Activated naive CD4-positive, alpha-beta T cell treated with anti-CD3 and anti-CD28 coated beads for 36 hours (primary cell): ENCODE measurements at regions of chr6 and their contacts with region 1.

Region 1: GRCh38 chr6:89371849-89372505 is 19.5 kb upstream of the UBE2J1 start:
- DNase-seq: peak; percentile 81
- H3K4me3 Mint-ChIP-seq: no peak overlapping the region
- H3K27ac Mint-ChIP-seq: no peak overlapping the region
- H3K4me1 Mint-ChIP-seq: peaks cover 15% of the 10 kb centered on the region
- H3K27me3 Mint-ChIP-seq: no peaks in the 10 kb centered on the region

Region 2: GRCh38 chr6:88177961-88178464 is 1194.0 kb before region 1 on chr6:
- CTCF ChIA-PET with region 1: no interaction called
- intact Hi-C with region 1: no loop called
- DNase-seq: no peak
- H3K4me3 Mint-ChIP-seq: no peak overlapping the region
- H3K27ac Mint-ChIP-seq: no peak overlapping the region
- H3K4me1 Mint-ChIP-seq: no peaks in the 10 kb centered on the region
- H3K27me3 Mint-ChIP-seq: peaks cover 28% of the 10 kb centered on the region

Region 3: DNA sequence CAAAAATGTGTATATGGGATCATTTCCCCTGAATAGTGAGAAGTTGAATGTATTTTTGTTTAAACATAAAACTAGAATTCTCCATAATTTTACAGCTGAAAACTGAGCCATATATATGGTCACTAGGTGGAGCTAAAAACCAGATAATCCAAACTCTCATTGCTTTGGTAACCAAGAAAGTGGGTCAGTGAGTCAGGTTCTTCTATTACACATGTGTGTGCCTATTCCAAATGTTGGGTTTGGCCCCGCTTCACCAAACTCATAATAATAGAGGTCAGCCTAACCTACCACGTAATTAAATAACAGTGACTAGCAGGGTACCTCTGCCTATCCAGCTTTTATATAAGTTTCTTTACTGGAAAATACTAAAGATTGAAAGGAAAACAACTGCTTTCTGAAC is 389.3 kb before region 1 on chr6:
- CTCF ChIA-PET with region 1: interaction called, 10 read pairs
- intact Hi-C with region 1: loop called (anchors 1 kb)
- DNase-seq: peak; percentile 37
- H3K4me3 Mint-ChIP-seq: no peak overlapping the region
- H3K27ac Mint-ChIP-seq: no peak overlapping the region
- H3K4me1 Mint-ChIP-seq: no peaks in the 10 kb centered on the region
- H3K27me3 Mint-ChIP-seq: no peaks in the 10 kb centered on the region

Region 4: DNA sequence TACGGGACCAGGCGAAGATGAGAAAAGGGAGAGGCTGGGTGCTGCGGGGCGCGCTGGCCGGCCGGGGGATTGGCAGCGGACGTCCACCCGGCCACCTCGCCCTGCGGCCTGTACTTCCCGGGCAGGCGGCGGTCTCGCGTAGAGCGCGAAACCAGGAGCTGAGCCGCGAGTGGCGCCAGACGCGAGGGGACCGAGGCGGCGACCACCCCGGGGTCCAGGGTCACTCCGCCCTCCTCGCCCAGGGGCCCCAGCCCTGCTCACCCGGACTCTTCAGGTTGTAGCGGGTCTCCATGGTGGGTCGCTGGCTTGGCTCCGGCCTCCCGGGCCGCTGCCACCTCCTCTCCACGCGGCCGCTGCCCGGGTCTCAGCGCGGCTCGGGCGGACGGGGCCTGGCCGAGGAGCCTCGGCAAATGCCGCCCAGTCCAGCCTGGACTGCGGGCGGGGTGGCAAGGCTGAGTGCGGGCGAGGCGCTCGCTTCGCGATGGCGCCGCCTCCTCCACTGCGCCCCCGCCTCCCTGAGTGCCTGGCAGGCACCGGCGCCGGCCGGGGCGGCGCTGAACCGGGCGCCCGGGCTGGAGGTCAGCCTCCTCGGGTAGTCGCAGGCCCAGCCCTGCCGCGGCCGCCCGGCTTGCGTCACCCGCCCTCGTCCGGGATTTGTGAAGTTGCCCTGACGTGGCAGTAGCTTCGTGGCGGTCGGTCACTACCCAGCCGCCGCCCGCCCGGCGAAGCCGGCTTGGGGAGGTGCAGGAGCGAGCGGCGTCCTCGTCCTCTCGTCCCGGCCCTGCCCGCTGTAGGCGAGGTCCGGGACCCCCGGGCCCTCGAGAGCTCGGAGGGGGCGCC is 19.5 kb before region 1 on chr6 and contains the start of gene UBE2J1:
- CTCF ChIA-PET with region 1: interaction called, 42 read pairs
- intact Hi-C with region 1: loop called (anchors 1 kb)
- DNase-seq: peak; percentile 71
- H3K4me3 Mint-ChIP-seq: peak within 1 kb of the TSS; percentile 90
- H3K27ac Mint-ChIP-seq: peak within 1 kb of the TSS; percentile 84
- H3K4me1 Mint-ChIP-seq: peaks cover 66% of the 10 kb centered on the region
- H3K27me3 Mint-ChIP-seq: no peaks in the 10 kb centered on the region
- total RNA-seq, gene UBE2J1: 10.8 to 10.9 TPM

Region 5: DNA sequence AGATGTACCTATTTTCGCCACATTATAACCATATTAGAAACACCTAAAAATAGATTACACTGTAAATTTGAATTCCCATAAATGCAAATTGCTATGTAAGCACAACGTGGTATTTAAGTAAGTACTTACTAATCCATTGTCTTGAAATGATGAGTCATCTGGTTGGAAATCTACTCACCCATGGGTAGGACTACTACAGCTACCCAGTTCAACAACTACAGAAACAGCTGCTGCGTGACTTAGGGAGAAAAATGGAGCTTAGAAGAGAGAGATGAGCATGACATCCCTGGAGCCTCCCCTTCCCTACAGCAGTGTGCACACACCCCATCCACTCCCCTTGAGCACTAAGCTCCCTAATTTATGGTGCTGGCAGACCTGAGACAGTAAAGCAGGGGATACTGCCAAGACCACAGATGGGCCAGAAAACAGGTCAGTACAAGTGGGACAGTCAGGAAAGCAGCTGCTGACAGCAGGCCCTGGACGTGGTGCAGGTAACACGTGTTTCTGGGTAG is 13.2 kb after region 1 on chr6:
- CTCF ChIA-PET with region 1: interaction called, 11 read pairs
- intact Hi-C with region 1: no loop called
- DNase-seq: no peak
- H3K4me3 Mint-ChIP-seq: no peak overlapping the region
- H3K27ac Mint-ChIP-seq: no peak overlapping the region
- H3K4me1 Mint-ChIP-seq: peaks cover 7% of the 10 kb centered on the region
- H3K27me3 Mint-ChIP-seq: no peaks in the 10 kb centered on the region

Region 6: DNA sequence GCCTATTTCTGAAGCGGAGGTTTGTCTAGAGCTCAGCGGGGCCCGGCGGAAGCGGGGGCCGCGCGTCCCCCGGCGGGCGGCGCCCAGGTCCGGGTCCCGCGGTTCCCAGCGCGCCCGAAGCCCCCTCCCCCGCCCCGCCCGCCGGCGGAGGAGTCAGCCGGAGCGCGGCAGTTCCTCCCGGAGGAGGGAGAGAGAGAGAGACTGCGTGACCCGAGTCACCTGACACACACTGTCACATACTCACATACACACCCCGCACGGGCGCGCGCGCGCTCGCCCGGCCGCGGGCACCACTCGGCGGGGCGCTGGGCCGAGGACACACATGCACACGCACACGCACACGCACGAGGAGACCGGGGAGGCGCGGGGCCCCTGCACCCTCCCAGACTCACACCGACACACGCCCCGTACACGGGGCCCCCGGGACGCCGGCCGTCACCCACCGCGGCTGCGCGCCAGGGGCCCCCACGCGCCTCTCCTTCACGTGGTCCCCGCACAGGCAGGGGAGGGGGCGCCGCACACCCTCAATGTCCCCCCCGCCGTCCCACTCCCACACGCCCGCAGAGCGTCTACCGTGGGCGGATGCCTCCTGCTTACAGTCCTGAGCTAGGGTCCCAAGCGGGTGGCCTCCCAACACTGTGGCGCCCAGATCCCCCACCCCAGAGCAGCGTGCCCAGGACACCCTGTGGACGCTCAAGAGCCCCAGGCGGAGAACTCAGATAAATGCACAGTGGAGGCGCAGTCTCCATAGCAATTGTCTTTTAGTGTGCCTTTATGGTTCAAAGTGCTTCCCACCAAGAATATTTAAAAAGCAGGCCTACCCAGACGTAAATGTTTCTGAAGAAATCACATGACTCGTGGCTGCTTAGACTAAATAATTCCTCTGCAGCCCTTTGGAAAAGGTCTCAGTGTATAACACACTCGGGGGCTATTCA is 40.4 kb after region 1 on chr6 and contains the start of gene RRAGD:
- CTCF ChIA-PET with region 1: interaction called, 20 read pairs
- intact Hi-C with region 1: loop called (anchors 1 kb)
- DNase-seq: peak; percentile 67
- H3K4me3 Mint-ChIP-seq: peak within 1 kb of the TSS; percentile 91
- H3K27ac Mint-ChIP-seq: peak within 1 kb of the TSS; percentile 31
- H3K4me1 Mint-ChIP-seq: peaks cover 23% of the 10 kb centered on the region
- H3K27me3 Mint-ChIP-seq: peaks cover 4% of the 10 kb centered on the region
- total RNA-seq, gene RRAGD: 11.3 to 13.2 TPM

Region 7: GRCh38 chr6:89597988-89598692 is 226.2 kb after region 1 on chr6:
- CTCF ChIA-PET with region 1: no interaction called
- intact Hi-C with region 1: loop called (anchors 5 kb)
- DNase-seq: peak; percentile 7
- H3K4me3 Mint-ChIP-seq: no peak overlapping the region
- H3K27ac Mint-ChIP-seq: no peak overlapping the region
- H3K4me1 Mint-ChIP-seq: peaks cover 18% of the 10 kb centered on the region
- H3K27me3 Mint-ChIP-seq: no peaks in the 10 kb centered on the region